ENCODE measurements at regions of chr11 and their contacts with region 1.

Region 1: DNA sequence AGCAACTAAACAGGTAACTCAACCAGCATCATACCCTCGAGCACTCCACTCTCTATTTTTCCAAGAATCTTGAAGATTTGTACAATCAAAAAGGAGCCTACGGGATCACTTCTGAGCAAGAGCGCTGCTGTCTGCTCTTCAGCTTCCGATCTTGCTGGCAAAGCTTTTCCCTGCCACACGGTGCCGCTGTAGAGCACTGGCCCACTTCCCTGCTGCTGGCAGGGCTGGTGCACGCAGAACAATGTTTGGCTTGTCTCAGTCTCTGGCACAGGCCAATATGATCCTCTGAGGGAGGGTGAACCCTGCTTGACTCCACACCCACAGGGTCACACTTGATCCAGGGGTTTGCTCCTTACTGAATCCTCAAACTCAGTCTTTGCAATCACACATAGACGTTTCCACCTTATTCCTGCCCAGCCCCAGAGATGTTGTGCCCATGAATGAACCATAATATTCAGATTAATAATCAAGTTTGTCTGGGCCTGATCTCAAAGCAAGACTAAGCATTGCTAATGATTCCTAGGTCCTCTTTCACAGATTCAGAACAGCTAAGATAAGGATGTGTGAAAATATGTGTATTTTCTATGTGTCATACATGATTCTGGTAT is 536.6 kb downstream of the SOX6 start:
- DNase-seq: peak; percentile 64
- H3K4me3 ChIP-seq: no peak overlapping the region
- H3K27ac ChIP-seq: no peak overlapping the region
- H3K4me1 ChIP-seq: peaks cover 27% of the 10 kb centered on the region
- H3K27me3 ChIP-seq: no peaks in the 10 kb centered on the region
- CTCF ChIP-seq: peak; percentile 97 to 98

Region 2: GRCh38 chr11:15650105-15650938 is 169.5 kb before region 1 on chr11:
- CTCF ChIA-PET with region 1: interaction called, 3 read pairs
- dilution Hi-C with region 1: no loop called
- in situ Hi-C with region 1: no loop called
- intact Hi-C with region 1: loop called (anchors 1 kb)
- DNase-seq: peak; percentile 88
- H3K4me3 ChIP-seq: peak overlapping the region; percentile 32 to 48 (median 35)
- H3K27ac ChIP-seq: peak overlapping the region; percentile 19
- H3K4me1 ChIP-seq: peaks cover 5% of the 10 kb centered on the region
- H3K27me3 ChIP-seq: no peaks in the 10 kb centered on the region
- CTCF ChIP-seq: peak; percentile 78 to 96

Region 3: DNA sequence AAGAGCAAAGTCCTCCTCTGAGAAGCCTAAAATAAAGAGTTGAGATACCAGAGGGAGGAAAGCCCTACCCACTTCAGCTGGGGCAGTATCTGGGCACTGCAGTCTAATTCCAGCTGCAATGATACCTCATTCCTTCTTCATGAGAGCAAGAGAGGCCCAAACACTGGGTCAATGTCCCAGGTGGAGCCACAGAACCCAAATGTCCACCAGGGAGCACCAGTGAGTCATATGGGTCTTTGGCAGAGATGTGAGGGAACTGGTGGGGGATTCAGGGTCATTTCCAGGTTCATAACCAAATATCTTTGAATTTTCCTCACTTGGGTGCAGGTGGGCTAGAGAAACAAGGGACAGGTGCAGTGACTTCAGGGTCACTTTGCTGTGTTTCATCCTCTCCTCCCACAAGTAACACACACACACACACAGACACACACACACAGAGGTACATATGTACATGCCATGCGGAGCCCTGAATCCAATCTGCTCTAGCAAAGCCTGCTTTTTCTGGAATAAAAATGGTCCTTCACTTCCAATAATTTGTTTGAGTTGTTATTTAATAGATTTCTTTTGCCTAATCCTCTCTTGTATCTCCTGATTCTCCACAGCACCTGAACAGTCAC is 48.9 kb before region 1 on chr11:
- CTCF ChIA-PET with region 1: no interaction called
- dilution Hi-C with region 1: no loop called
- in situ Hi-C with region 1: no loop called
- intact Hi-C with region 1: loop called (anchors 5 kb)
- DNase-seq: peak; percentile 28
- H3K4me3 ChIP-seq: no peak overlapping the region
- H3K27ac ChIP-seq: no peak overlapping the region
- H3K4me1 ChIP-seq: no peaks in the 10 kb centered on the region
- H3K27me3 ChIP-seq: peaks cover 3% of the 10 kb centered on the region
- CTCF ChIP-seq: peak; percentile 57 to 81

Region 4: GRCh38 chr11:15793043-15793996 is 26.5 kb before region 1 on chr11:
- CTCF ChIA-PET with region 1: no interaction called
- dilution Hi-C with region 1: no loop called
- in situ Hi-C with region 1: no loop called
- intact Hi-C with region 1: loop called (anchors 1 kb)
- DNase-seq: peak; percentile 87
- H3K4me3 ChIP-seq: no peak overlapping the region
- H3K27ac ChIP-seq: peak overlapping the region; percentile 95
- H3K4me1 ChIP-seq: peaks cover 13% of the 10 kb centered on the region
- H3K27me3 ChIP-seq: no peaks in the 10 kb centered on the region
- CTCF ChIP-seq: no peak

Region 5: DNA sequence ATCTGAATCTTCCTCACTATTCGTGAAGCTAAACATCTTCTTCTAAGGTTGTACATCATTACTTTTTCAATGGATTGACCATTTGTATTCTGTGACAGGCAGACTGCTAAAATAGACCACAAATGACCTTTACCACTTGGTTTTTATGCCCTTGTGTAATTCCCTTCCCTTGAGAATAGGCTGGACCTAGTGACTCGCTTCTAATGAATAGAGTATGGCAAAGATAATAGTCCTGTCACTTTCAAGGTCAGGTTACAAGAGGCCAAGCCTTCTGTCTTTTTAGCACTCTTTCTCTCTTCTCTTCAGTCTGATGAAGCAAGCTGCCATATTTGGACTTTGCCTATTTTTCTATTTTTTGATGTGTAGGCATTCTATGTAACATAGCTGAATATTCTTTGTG is 43.6 kb after region 1 on chr11:
- CTCF ChIA-PET with region 1: no interaction called
- dilution Hi-C with region 1: no loop called
- in situ Hi-C with region 1: no loop called
- intact Hi-C with region 1: loop called (anchors 2 kb)
- DNase-seq: no peak
- H3K4me3 ChIP-seq: no peak overlapping the region
- H3K27ac ChIP-seq: no peak overlapping the region
- H3K4me1 ChIP-seq: peaks cover 12% of the 10 kb centered on the region
- H3K27me3 ChIP-seq: no peaks in the 10 kb centered on the region
- CTCF ChIP-seq: no peak